Right ventricle myocardium inferior (tissue), 1 donor: ENCODE measurements at regions of chr13 and their contacts with region 1.

Region 1: GRCh38 chr13:80132741-80133601 is 208.0 kb downstream of the SPRY2 start:
- DNase-seq: peak; percentile 72
- ATAC-seq: peak; percentile 97

Region 2: GRCh38 chr13:79631051-79631659 is 501.8 kb before region 1 on chr13:
- intact Hi-C with region 1: loop called (anchors 10 kb)
- DNase-seq: no peak
- ATAC-seq: peak; percentile 71

Region 3: DNA sequence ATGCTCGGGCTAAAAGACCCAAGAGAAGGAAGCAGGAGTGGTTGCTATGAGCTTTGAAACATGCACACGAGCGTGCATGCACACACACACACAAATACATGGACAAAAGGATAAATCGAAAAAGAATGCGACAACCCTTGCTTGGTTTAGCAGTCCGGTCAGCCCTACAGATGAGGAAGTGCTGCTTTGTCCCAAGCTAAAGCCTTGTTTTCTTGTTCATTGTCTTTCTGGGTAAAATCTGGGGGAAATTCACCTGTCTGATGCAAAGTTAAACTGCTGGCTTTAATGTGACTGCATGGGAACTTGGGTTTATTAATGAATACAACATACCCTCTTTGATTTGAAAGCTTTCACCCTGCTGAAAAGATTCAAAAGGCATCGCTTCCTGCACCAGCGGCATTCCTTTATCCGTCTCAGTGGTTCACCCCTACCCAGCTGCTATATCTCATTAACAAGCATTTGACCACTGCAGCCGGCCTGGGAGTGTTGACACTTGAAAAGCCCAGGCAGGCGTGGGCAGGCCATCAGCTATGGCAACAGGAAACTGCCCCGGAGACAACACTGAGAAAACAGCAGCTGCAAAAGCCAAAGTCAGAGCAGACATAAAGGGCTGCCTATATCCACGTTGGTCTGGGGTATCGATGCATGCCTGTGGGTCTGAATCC is 350.3 kb before region 1 on chr13:
- intact Hi-C with region 1: loop called (anchors 10 kb)
- DNase-seq: peak; percentile 82
- ATAC-seq: peak; percentile 95

Region 4: DNA sequence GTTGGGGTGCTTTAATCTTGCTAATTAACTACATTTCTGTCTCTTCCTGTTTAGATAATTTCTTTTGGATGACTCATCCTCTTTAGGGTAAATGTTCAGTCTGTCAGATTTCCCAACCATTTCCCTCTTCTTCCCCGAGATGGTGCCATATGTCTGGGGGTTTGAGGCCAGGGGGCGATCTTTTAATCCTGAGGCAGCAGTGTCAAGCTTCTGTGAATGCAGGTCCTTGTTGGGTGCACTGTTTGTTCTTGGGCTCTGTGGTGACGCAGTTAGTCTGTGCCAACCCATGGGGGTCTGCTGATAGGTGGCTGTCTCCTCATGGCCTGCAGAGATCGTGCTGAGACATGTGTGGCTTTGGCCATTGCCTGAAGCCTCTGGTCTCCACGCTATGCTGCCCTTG is 231.6 kb before region 1 on chr13:
- intact Hi-C with region 1: loop called (anchors 10 kb)
- DNase-seq: no peak
- ATAC-seq: no peak

Region 5: DNA sequence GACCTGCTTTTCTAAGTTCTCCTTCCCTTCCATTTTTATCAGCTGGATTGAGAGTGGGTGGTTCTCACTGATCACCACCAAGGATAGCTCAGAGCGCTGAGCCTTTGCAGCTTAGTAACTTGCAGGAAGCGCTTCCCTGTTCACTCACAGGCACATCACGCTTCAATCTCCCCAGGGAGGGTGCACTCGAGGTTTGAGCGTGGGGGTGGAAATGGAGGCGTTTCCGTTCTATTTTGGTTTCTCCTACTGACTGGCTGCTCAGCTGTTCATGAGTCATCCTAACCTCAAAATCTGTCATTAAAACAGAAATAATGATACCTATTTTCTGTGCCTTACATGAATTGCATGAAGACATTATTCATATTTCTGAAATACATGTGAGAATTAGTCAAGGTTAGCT is 84.2 kb before region 1 on chr13:
- intact Hi-C with region 1: loop called (anchors 2 kb)
- DNase-seq: peak; percentile 84
- ATAC-seq: peak; percentile 97

Region 6: DNA sequence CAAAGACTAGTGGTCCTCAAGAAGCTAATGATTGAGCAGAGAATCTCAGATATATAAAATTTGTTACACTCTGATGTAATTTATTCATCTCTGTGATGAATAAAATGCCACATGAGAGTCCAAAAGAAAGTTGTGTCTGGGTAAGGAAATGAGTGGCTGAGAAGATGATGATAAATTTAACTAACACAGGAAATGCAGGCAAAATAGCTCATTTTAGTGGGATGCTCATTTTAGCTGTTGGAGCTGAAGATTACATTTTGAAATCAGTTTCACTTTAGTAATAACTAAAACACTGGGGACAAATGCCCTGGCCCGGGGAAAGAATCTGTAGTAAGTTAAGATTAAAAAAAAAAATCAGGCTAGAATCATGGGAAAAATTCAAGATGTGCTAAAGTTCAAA is 172.8 kb after region 1 on chr13:
- intact Hi-C with region 1: loop called (anchors 10 kb)
- DNase-seq: no peak
- ATAC-seq: no peak

Region 7: GRCh38 chr13:81031996-81032395 is 899.0 kb after region 1 on chr13:
- intact Hi-C with region 1: no loop called
- DNase-seq: no peak
- ATAC-seq: no peak